CD4-positive, alpha-beta T cell (primary cell): ENCODE measurements at regions of chr1 and their contacts with region 1.

Region 1: GRCh38 chr1:226940029-226940805 is at the start of gene COQ8A:
- DNase-seq: peak; percentile 96 to 100 (median 99)
- ATAC-seq: peak; percentile 91
- H3K4me3 ChIP-seq: peak within 1 kb of the TSS; percentile 94
- H3K4me3 Mint-ChIP-seq: peak within 1 kb of the TSS; percentile 91
- H3K27ac ChIP-seq: peak within 1 kb of the TSS; percentile 96 to 98
- H3K27ac Mint-ChIP-seq: peak within 1 kb of the TSS; percentile 95
- H3K4me1 ChIP-seq: peaks cover 46% of the 10 kb centered on the region
- H3K4me1 Mint-ChIP-seq: peaks cover 68% of the 10 kb centered on the region
- H3K27me3 ChIP-seq: no peaks in the 10 kb centered on the region
- H3K27me3 Mint-ChIP-seq: no peaks in the 10 kb centered on the region
- CTCF ChIP-seq: no peak
- total RNA-seq, gene COQ8A: 55.0 to 56.0 TPM

Region 2: DNA sequence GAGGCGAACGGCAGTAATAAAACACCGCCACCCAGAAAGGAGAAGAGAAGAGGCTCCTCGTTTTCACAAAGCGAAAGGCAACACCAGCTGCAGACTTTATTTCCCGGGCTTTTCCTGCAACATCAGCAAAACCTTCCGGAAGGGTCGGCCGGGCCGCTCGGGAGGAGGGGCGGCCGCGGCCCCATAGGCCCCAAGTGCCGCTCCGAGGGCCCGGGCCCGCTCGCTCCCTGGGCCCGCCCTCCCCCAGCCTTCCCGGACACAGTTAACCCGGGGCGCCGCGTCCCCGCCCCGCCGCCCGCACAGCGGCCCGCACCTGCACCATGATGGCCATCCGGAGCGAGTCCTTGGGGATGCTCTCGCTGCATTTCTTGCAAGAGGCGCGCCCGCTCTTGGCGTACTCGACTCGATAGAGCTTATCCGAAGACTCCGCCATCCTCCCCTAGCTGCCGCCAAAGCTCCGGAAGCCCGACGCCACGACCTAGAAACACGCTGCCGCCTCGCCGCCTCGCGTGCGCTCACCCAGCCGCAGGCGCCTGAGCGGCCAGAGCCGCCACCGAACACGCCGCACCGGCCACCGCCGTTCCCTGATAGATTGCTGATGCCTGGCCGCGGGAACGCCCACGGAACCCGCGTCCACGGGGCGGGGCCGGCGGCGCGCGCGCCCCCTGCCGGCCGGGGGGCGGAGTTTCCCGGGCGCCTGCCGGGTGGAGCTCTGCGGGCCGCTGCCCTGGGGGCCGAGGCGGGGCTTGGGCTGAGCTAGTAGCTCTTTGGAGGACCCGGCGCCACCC is 532.5 kb before region 1 on chr1 and contains the start of gene PARP1:
- CTCF ChIA-PET with region 1: interaction called, 6 read pairs
- POLR2A ChIA-PET with region 1: interaction called, 20 read pairs
- intact Hi-C with region 1: no loop called
- DNase-seq: peak; percentile 75 to 95 (median 85)
- ATAC-seq: peak; percentile 82
- H3K4me3 ChIP-seq: peak within 1 kb of the TSS; percentile 79
- H3K4me3 Mint-ChIP-seq: peak within 1 kb of the TSS; percentile 98
- H3K27ac ChIP-seq: peak within 1 kb of the TSS; percentile 48 to 55
- H3K27ac Mint-ChIP-seq: peak within 1 kb of the TSS; percentile 94
- H3K4me1 ChIP-seq: peaks cover 46% of the 10 kb centered on the region
- H3K4me1 Mint-ChIP-seq: peaks cover 55% of the 10 kb centered on the region
- H3K27me3 ChIP-seq: no peaks in the 10 kb centered on the region
- H3K27me3 Mint-ChIP-seq: no peaks in the 10 kb centered on the region
- CTCF ChIP-seq: peak; percentile 69
- total RNA-seq, gene PARP1: 59.3 to 63.6 TPM

Region 3: GRCh38 chr1:226532553-226532952 is 407.7 kb before region 1 on chr1:
- CTCF ChIA-PET with region 1: no interaction called
- POLR2A ChIA-PET with region 1: no interaction called
- intact Hi-C with region 1: no loop called
- DNase-seq: no peak
- ATAC-seq: no peak
- H3K4me3 ChIP-seq: no peak overlapping the region
- H3K4me3 Mint-ChIP-seq: no peak overlapping the region
- H3K27ac ChIP-seq: no peak overlapping the region
- H3K27ac Mint-ChIP-seq: no peak overlapping the region
- H3K4me1 ChIP-seq: no peaks in the 10 kb centered on the region
- H3K4me1 Mint-ChIP-seq: no peaks in the 10 kb centered on the region
- H3K27me3 ChIP-seq: no peaks in the 10 kb centered on the region
- H3K27me3 Mint-ChIP-seq: peaks cover 15% of the 10 kb centered on the region
- CTCF ChIP-seq: no peak

Region 4: DNA sequence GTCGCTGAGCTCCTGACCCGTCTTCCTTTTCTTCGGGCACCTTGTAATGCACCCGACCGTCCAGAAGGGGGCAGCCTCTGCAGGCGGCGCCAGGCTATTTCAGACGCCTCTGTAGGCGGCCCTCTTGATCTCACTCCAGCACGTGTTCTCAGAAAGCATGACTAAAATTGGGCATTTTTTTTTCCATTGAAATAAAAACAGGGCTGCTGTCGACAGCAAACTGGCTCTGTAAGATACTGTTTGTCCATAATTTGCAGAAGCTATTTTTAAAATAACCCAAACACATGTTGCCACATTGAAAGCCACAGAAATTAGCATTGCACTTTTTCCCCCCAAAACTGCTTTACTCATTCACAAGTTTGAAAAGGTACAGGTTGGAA is 313.6 kb before region 1 on chr1:
- CTCF ChIA-PET with region 1: interaction called, 4 read pairs
- POLR2A ChIA-PET with region 1: interaction called, 7 read pairs
- intact Hi-C with region 1: loop called in 1 of 2 experiments (anchors 1 kb)
- DNase-seq: peak; percentile 65 to 88 (median 73)
- ATAC-seq: peak; percentile 97
- H3K4me3 ChIP-seq: peak overlapping the region; percentile 43
- H3K4me3 Mint-ChIP-seq: no peak overlapping the region
- H3K27ac ChIP-seq: no peak overlapping the region
- H3K27ac Mint-ChIP-seq: peak overlapping the region; percentile 46
- H3K4me1 ChIP-seq: peaks cover 18% of the 10 kb centered on the region
- H3K4me1 Mint-ChIP-seq: peaks cover 22% of the 10 kb centered on the region
- H3K27me3 ChIP-seq: no peaks in the 10 kb centered on the region
- H3K27me3 Mint-ChIP-seq: no peaks in the 10 kb centered on the region
- CTCF ChIP-seq: peak; percentile 99

Region 5: GRCh38 chr1:226882631-226883409 is 57.4 kb before region 1 on chr1:
- CTCF ChIA-PET with region 1: interaction called, 3 read pairs
- POLR2A ChIA-PET with region 1: interaction called, 53 read pairs
- intact Hi-C with region 1: loop called in 1 of 2 experiments (anchors 2 kb)
- DNase-seq: peak in 6 of 14 experiments; percentile 4 to 80 (median 47)
- ATAC-seq: peak; percentile 84
- H3K4me3 ChIP-seq: peak overlapping the region; percentile 44
- H3K4me3 Mint-ChIP-seq: peak overlapping the region; percentile 67
- H3K27ac ChIP-seq: peak overlapping the region; percentile 49 to 81
- H3K27ac Mint-ChIP-seq: peak overlapping the region; percentile 82
- H3K4me1 ChIP-seq: peaks cover 50% of the 10 kb centered on the region
- H3K4me1 Mint-ChIP-seq: peaks cover 43% of the 10 kb centered on the region
- H3K27me3 ChIP-seq: no peaks in the 10 kb centered on the region
- H3K27me3 Mint-ChIP-seq: no peaks in the 10 kb centered on the region
- CTCF ChIP-seq: no peak

Region 6: GRCh38 chr1:226951286-226952117 is 11.3 kb after region 1 on chr1:
- CTCF ChIA-PET with region 1: no interaction called
- POLR2A ChIA-PET with region 1: interaction called, 24 read pairs
- intact Hi-C with region 1: no loop called
- DNase-seq: no peak
- ATAC-seq: no peak
- H3K4me3 ChIP-seq: no peak overlapping the region
- H3K4me3 Mint-ChIP-seq: no peak overlapping the region
- H3K27ac ChIP-seq: no peak overlapping the region
- H3K27ac Mint-ChIP-seq: no peak overlapping the region
- H3K4me1 ChIP-seq: peaks cover 4% of the 10 kb centered on the region
- H3K4me1 Mint-ChIP-seq: peaks cover 55% of the 10 kb centered on the region
- H3K27me3 ChIP-seq: no peaks in the 10 kb centered on the region
- H3K27me3 Mint-ChIP-seq: no peaks in the 10 kb centered on the region
- CTCF ChIP-seq: no peak

Region 7: GRCh38 chr1:226973898-226974543 is 33.8 kb after region 1 on chr1:
- CTCF ChIA-PET with region 1: no interaction called
- POLR2A ChIA-PET with region 1: no interaction called
- intact Hi-C with region 1: no loop called
- DNase-seq: peak in 1 of 14 experiments; percentile 1
- ATAC-seq: no peak
- H3K4me3 ChIP-seq: no peak overlapping the region
- H3K4me3 Mint-ChIP-seq: no peak overlapping the region
- H3K27ac ChIP-seq: no peak overlapping the region
- H3K27ac Mint-ChIP-seq: no peak overlapping the region
- H3K4me1 ChIP-seq: no peaks in the 10 kb centered on the region
- H3K4me1 Mint-ChIP-seq: no peaks in the 10 kb centered on the region
- H3K27me3 ChIP-seq: no peaks in the 10 kb centered on the region
- H3K27me3 Mint-ChIP-seq: no peaks in the 10 kb centered on the region
- CTCF ChIP-seq: no peak

Region 8: DNA sequence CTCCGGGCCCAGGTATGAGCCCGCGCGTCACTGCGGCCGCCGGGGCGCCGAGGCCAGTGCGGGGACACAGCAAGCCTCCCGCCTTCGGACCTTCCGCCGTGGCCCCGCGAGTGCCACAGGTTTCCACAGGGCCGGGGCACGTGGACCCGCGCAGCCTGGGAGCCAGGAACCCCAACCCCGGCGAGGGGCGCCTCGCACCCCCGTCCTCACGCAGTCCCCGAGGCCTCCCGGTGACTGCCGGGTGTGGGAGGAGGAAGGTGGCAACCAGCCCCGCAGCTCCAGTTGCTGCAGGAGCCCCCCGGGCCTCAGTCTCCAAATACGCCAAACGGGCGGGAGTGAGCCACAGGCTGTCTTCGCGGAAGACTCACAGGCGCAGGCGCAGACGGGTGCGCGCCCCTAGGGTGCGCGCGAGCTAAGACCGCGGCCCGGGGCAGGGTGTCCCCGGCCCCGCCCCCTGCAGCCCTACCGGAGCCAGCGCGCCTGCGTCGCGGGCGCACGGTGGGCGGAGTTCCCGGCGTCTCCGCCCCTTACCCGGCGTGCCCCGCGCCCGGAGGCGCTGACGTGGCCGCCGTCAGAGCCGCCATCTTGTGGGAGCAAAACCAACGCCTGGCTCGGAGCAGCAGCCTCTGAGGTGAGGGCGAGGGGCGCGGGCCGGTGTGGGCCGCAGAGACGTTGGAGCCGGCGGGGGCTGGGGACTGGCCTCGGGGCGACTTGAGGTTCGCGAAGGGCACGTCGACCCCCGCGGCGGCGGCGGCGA is 1142.1 kb after region 1 on chr1 and contains the start of gene ARF1:
- CTCF ChIA-PET with region 1: no interaction called
- POLR2A ChIA-PET with region 1: interaction called, 5 read pairs
- intact Hi-C with region 1: loop called in 1 of 2 experiments (anchors 10 kb)
- DNase-seq: peak; percentile 81 to 97 (median 93)
- ATAC-seq: peak; percentile 84
- H3K4me3 ChIP-seq: peak within 1 kb of the TSS; percentile 80
- H3K4me3 Mint-ChIP-seq: peak within 1 kb of the TSS; percentile 97
- H3K27ac ChIP-seq: peak within 1 kb of the TSS; percentile 86 to 89
- H3K27ac Mint-ChIP-seq: peak within 1 kb of the TSS; percentile 99
- H3K4me1 ChIP-seq: peaks cover 62% of the 10 kb centered on the region
- H3K4me1 Mint-ChIP-seq: peaks cover 53% of the 10 kb centered on the region
- H3K27me3 ChIP-seq: no peaks in the 10 kb centered on the region
- H3K27me3 Mint-ChIP-seq: no peaks in the 10 kb centered on the region
- CTCF ChIP-seq: no peak
- total RNA-seq, gene ARF1: 318 to 322 TPM